PC-9 (cell line): ENCODE measurements at regions of chr5 and their contacts with region 1.

Region 1: GRCh38 chr5:157511651-157512644 is 51.9 kb downstream of the NIPAL4 start:
- DNase-seq: peak; percentile 85 to 87
- H3K4me3 ChIP-seq: no peak overlapping the region
- H3K27ac ChIP-seq: peak overlapping the region; percentile 96
- H3K4me1 ChIP-seq: peaks cover 40% of the 10 kb centered on the region
- H3K27me3 ChIP-seq: no peaks in the 10 kb centered on the region
- CTCF ChIP-seq: no peak

Region 2: GRCh38 chr5:157575381-157576020 is 63.6 kb after region 1 on chr5 and contains the start of gene ADAM19:
- CTCF ChIA-PET with region 1: no interaction called
- POLR2A ChIA-PET with region 1: no interaction called
- intact Hi-C with region 1: loop called (anchors 1 kb)
- DNase-seq: peak in 1 of 2 experiments; percentile 50
- H3K4me3 ChIP-seq: peak within 1 kb of the TSS; percentile 62
- H3K27ac ChIP-seq: peak within 1 kb of the TSS; percentile 35
- H3K4me1 ChIP-seq: peaks cover 25% of the 10 kb centered on the region; the same call in 1 of the 2 replicates
- H3K27me3 ChIP-seq: no peaks in the 10 kb centered on the region
- CTCF ChIP-seq: no peak
- total RNA-seq, gene ADAM19: 7.6 and 9.3 TPM in 2 replicates

Region 3: GRCh38 chr5:157665467-157666100 is 153.6 kb after region 1 on chr5:
- CTCF ChIA-PET with region 1: no interaction called
- POLR2A ChIA-PET with region 1: no interaction called
- intact Hi-C with region 1: loop called (anchors 10 kb)
- DNase-seq: peak; percentile 35 to 93
- H3K4me3 ChIP-seq: no peak overlapping the region
- H3K27ac ChIP-seq: peak overlapping the region; percentile 33; the same call in 1 of the 2 replicates
- H3K4me1 ChIP-seq: peaks cover 5% of the 10 kb centered on the region
- H3K27me3 ChIP-seq: no peaks in the 10 kb centered on the region
- CTCF ChIP-seq: no peak